Heart left ventricle (tissue), 16 donors: ENCODE measurements at regions of chr10 and their contacts with region 1.

Region 1: GRCh38 chr10:42952349-42952748 is 124.5 kb upstream of the RET start:
- DNase-seq: peak in 3 of 5 donors; percentile 49 to 76 (median 64)
- ATAC-seq: peak; percentile 55 to 85 (median 76)
- H3K4me3 ChIP-seq: peak overlapping the region in 1 of 12 donors; percentile 16
- H3K27ac ChIP-seq: peak overlapping the region in 5 of 12 donors; percentile 18 to 51 (median 25)
- H3K4me1 ChIP-seq: peaks cover 0 to 17% (median 10%) of the 10 kb centered on the region in 12 donors
- H3K27me3 ChIP-seq: peaks cover 0 to 26% (median 10%) of the 10 kb centered on the region in 9 donors
- CTCF ChIP-seq: no peak
- POLR2A ChIP-seq: no peak

Region 2: DNA sequence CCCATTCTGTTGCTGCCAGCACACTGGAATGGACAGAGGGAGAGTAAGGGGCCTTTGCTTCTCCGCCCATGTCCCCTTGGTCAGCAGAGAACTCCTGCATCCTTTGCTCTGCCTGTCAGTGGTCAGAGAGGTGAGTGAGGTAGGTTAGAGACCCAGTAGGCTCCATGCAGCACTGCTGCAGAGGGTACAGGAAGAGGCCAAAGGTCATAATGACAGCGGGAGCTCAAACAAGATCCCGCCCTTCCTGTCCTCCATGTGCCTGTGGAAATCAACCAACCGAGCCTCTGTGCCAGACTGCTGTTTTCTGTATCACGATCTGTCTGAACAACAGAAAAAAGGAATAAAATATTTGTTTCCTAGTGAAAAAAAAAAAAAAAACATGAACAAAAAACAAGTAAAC is 395.4 kb before region 1 on chr10:
- intact Hi-C with region 1: no loop called
- DNase-seq: no peak
- ATAC-seq: no peak
- H3K4me3 ChIP-seq: no peak overlapping the region
- H3K27ac ChIP-seq: no peak overlapping the region
- H3K4me1 ChIP-seq: peaks cover 0 to 10% (median 3%) of the 10 kb centered on the region in 12 donors
- H3K27me3 ChIP-seq: no peaks in the 10 kb centered on the region
- CTCF ChIP-seq: no peak
- POLR2A ChIP-seq: no peak

Region 3: GRCh38 chr10:43078987-43079275 is 126.6 kb after region 1 on chr10:
- intact Hi-C with region 1: loop called in 1 of 10 experiments (anchors 10 kb)
- DNase-seq: peak in 2 of 5 donors; percentile 25 to 32
- ATAC-seq: peak; percentile 34 to 49 (median 41)
- H3K4me3 ChIP-seq: no peak overlapping the region
- H3K27ac ChIP-seq: no peak overlapping the region
- H3K4me1 ChIP-seq: peaks cover 0 to 22% (median 2%) of the 10 kb centered on the region in 12 donors
- H3K27me3 ChIP-seq: peaks cover 12 to 92% (median 32%) of the 10 kb centered on the region in 9 donors
- CTCF ChIP-seq: peak; percentile 27 to 62 (median 48)
- POLR2A ChIP-seq: no peak